PC-3 (cell line): ENCODE measurements at regions of chr13 and their contacts with region 1.

Region 1: DNA sequence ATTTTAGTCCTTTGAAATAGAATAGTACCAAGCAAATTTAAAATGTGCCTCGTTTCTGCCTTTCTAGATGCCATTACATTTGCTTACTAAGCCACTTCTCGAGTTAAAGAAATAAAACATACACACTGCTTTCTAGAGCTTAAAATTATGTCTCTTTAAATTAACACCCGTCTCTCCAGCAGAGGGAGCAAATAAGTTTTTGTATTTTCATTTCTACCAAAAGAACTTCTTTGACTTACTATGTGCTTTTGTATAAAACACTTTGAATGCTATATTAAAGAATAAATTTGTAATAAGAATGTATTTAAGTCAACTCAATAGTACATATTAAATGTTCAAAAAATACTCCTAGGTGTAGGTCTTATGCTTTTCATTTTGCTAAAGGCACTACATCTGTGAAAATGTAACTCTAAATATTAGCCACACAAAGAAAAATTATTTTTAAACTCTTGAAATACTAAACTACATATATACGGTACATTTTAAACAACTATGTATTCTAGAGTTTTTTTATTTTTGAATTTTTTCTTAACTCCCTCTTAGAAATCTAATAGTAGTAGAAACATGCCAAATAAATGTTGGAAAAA is 269.3 kb upstream of the MIR17HG start:
- DNase-seq: peak; percentile 21
- ATAC-seq: no peak
- H3K4me3 ChIP-seq: no peak overlapping the region
- H3K27ac ChIP-seq: no peak overlapping the region
- H3K4me1 ChIP-seq: no peaks in the 10 kb centered on the region
- H3K27me3 ChIP-seq: peaks cover 27% of the 10 kb centered on the region; the same call in 1 of the 2 replicates
- CTCF ChIP-seq: peak; percentile 54; the same call in 1 of the 2 replicates

Region 2: DNA sequence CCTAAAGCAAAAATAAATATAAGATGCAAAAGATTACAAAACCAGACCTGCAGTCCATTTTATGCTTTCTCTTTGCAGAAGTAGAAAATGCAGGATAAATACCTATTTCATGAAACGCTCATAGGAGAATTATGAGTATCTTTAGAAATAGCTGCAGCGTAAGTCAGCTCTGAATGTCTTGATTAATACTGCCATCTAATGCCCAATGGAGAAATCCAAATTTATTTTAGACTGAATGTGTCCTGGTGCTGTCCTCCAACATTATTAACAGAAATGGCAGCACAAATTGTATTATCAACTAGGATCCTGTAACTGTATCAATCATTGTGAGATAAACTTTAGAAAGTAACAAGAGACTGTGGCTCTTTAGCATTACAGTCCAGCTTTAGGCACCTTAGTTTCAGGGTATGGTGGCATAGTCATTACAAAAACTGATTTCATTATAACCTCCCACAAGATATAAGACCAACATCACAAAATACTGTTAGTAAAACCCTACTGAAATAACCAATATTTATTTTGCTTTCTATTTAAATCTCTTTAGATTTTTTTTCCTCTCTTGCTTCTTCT is 107.2 kb after region 1 on chr13:
- CTCF ChIA-PET with region 1: interaction called, 8 read pairs
- POLR2A ChIA-PET with region 1: no interaction called
- intact Hi-C with region 1: loop called (anchors 1 kb)
- DNase-seq: peak; percentile 54
- ATAC-seq: peak; percentile 65
- H3K4me3 ChIP-seq: no peak overlapping the region
- H3K27ac ChIP-seq: no peak overlapping the region
- H3K4me1 ChIP-seq: no peaks in the 10 kb centered on the region
- H3K27me3 ChIP-seq: peaks cover 16% of the 10 kb centered on the region
- CTCF ChIP-seq: peak; percentile 55

Region 3: GRCh38 chr13:91247768-91248167 is 169.6 kb after region 1 on chr13:
- CTCF ChIA-PET with region 1: interaction called, 7 read pairs
- POLR2A ChIA-PET with region 1: no interaction called
- intact Hi-C with region 1: loop called (anchors 1 kb)
- DNase-seq: peak; percentile 23
- ATAC-seq: no peak; the same call in 1 of the 2 replicates
- H3K4me3 ChIP-seq: no peak overlapping the region
- H3K27ac ChIP-seq: no peak overlapping the region
- H3K4me1 ChIP-seq: no peaks in the 10 kb centered on the region
- H3K27me3 ChIP-seq: peaks cover 28% of the 10 kb centered on the region
- CTCF ChIP-seq: peak; percentile 52

Region 4: DNA sequence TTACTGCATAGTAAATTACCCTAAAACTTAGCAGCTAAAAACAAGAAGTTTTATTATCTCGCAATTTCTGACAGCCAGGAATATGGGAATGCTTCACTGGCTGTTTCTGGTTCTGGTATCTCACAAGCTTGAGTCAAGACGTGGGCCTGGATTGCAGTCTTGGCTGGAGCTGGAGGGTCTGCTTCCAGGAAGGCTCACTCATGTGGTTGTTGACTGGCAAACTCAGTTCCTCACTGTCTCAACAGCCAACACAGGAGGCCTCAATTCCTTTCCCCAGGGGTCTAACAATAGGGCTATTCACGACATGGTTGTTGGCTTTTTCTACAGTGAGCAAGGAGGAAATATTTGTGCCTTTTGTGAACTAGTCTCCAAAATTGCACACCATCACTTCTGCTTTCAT is 466.5 kb after region 1 on chr13:
- CTCF ChIA-PET with region 1: no interaction called
- POLR2A ChIA-PET with region 1: no interaction called
- intact Hi-C with region 1: no loop called
- DNase-seq: no peak
- ATAC-seq: no peak
- H3K4me3 ChIP-seq: no peak overlapping the region
- H3K27ac ChIP-seq: no peak overlapping the region
- H3K4me1 ChIP-seq: no peaks in the 10 kb centered on the region
- H3K27me3 ChIP-seq: no peaks in the 10 kb centered on the region
- CTCF ChIP-seq: no peak

Region 5: DNA sequence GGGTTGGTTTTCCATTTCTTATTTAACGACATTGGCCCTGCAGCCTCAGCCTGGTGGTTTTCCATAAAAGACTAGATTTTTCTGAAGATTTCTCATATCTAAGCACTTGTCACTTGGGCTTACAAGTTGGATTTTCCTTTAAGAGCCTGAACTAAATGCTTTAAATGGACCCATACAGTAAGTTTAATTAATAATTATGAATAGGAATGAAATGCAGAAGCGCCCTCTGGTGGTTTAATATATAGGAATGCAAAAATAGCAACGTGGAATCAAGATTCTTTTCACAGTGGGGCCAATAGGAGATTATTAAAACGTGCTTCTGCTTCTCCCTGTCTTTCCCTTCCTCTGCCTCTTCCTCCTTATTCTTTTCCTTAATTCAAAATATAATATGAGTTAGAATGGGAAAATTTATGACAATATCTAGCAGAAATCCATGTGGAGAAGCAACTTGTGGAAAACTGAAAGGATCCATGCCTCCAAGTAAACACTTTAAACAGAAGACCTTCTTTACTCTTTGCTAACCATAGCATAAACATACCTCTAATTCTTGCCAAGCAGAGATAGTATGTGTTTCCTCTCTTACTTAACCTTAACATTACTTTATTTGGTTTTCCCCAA is 644.2 kb after region 1 on chr13:
- CTCF ChIA-PET with region 1: no interaction called
- POLR2A ChIA-PET with region 1: no interaction called
- intact Hi-C with region 1: no loop called
- DNase-seq: peak; percentile 41
- ATAC-seq: no peak; the same call in 1 of the 2 replicates
- H3K4me3 ChIP-seq: no peak overlapping the region
- H3K27ac ChIP-seq: no peak overlapping the region
- H3K4me1 ChIP-seq: no peaks in the 10 kb centered on the region
- H3K27me3 ChIP-seq: no peaks in the 10 kb centered on the region
- CTCF ChIP-seq: peak; percentile 63